Caco-2 (cell line): ENCODE measurements at regions of chr4 and their contacts with region 1.

Region 1: DNA sequence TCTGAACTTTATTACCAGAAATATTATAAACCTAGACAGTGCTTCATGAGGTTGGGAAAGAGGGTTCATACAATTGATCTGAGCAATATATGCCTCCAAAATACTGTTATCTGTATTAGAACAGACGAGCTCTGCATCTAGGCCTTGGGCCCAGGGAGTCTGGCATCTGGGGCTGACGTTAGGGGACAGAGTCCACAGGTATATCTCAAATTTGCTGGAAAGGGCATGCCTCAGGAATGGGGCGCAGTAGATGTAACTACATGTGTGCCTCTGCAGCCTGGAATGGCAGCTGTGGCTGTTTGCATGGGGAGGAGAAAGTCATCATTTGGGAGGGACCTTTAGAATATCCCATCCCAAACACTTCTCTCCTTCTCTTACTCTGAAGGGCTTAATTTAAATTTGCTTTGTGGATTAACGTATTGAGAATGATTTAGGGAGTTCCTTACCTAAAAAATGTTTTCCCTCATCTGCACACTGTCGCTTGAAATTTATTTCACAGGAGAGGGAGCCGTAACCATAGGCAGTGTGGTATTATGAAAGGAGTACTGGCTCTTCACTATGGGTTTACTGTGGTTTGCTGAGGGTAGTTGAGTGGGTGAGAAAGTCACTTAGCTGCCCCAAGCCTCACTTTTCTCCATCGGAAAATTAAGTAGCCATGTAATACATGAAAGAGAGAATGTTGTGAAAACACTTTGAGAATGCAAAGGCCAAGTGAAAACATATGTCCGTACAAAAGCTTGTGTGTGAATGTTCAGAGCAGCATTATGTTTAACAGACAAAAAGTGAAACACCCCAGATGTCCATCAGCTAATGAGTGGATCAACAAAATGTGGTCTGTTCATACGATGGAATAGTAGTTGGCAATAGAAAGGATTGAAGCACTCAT is 5.9 kb downstream of the ADD1 start:
- DNase-seq: peak; percentile 60 to 70
- H3K4me3 ChIP-seq: no peak overlapping the region
- H3K4me3 Mint-ChIP-seq: peak overlapping the region; percentile 47
- H3K27ac Mint-ChIP-seq: peak overlapping the region; percentile 78
- H3K4me1 ChIP-seq: peaks cover 34% of the 10 kb centered on the region
- H3K4me1 Mint-ChIP-seq: peaks cover 46% of the 10 kb centered on the region
- H3K27me3 ChIP-seq: no peaks in the 10 kb centered on the region
- H3K27me3 Mint-ChIP-seq: no peaks in the 10 kb centered on the region
- CTCF ChIP-seq: no peak

Region 2: DNA sequence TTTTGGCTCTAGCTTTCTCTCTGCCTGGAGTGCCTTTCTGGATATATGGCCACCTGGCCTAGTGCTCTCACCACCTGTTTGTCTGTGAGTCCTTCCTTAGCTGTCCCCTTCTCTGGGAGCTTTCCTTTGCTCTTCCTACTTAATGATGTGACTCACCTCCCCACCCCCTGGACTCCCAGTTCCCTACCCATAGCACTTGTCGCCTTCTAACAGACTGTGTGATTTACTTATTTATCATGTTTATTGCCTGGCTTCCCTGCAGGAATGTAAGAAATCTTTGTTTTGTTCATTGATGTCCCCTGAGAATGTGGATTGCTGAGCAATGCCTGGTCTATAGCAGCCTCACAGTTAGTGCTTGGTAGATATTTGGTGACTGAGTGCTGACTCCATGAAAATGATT is 13.0 kb after region 1 on chr4:
- CTCF ChIA-PET with region 1: interaction called, 4 read pairs
- POLR2A ChIA-PET with region 1: no interaction called
- intact Hi-C with region 1: loop called (anchors 2 kb)
- DNase-seq: peak; percentile 33 to 50
- H3K4me3 ChIP-seq: no peak overlapping the region
- H3K4me3 Mint-ChIP-seq: peak overlapping the region; percentile 69
- H3K27ac Mint-ChIP-seq: peak overlapping the region; percentile 91
- H3K4me1 ChIP-seq: peaks cover 93% of the 10 kb centered on the region
- H3K4me1 Mint-ChIP-seq: peaks cover 64% of the 10 kb centered on the region
- H3K27me3 ChIP-seq: no peaks in the 10 kb centered on the region
- H3K27me3 Mint-ChIP-seq: no peaks in the 10 kb centered on the region
- CTCF ChIP-seq: no peak

Region 3: GRCh38 chr4:2907706-2908306 is 58.3 kb after region 1 on chr4:
- CTCF ChIA-PET with region 1: no interaction called
- POLR2A ChIA-PET with region 1: no interaction called
- intact Hi-C with region 1: loop called (anchors 2 kb)
- DNase-seq: peak; percentile 68 to 79
- H3K4me3 ChIP-seq: no peak overlapping the region
- H3K4me3 Mint-ChIP-seq: peak overlapping the region; percentile 42
- H3K27ac Mint-ChIP-seq: peak overlapping the region; percentile 64
- H3K4me1 ChIP-seq: peaks cover 22% of the 10 kb centered on the region
- H3K4me1 Mint-ChIP-seq: peaks cover 11% of the 10 kb centered on the region
- H3K27me3 ChIP-seq: no peaks in the 10 kb centered on the region
- H3K27me3 Mint-ChIP-seq: no peaks in the 10 kb centered on the region
- CTCF ChIP-seq: no peak